ENCODE measurements at regions of chr19 and their contacts with region 1.

Region 1: GRCh38 chr19:43425567-43426392 is 11.1 kb downstream of the TEX101 start:
- DNase-seq: peak; percentile 40
- H3K4me3 ChIP-seq: no peak overlapping the region
- H3K27ac ChIP-seq: no peak overlapping the region
- H3K4me1 ChIP-seq: no peaks in the 10 kb centered on the region
- H3K27me3 ChIP-seq: no peaks in the 10 kb centered on the region
- CTCF ChIP-seq: peak; percentile 58 to 72

Region 2: DNA sequence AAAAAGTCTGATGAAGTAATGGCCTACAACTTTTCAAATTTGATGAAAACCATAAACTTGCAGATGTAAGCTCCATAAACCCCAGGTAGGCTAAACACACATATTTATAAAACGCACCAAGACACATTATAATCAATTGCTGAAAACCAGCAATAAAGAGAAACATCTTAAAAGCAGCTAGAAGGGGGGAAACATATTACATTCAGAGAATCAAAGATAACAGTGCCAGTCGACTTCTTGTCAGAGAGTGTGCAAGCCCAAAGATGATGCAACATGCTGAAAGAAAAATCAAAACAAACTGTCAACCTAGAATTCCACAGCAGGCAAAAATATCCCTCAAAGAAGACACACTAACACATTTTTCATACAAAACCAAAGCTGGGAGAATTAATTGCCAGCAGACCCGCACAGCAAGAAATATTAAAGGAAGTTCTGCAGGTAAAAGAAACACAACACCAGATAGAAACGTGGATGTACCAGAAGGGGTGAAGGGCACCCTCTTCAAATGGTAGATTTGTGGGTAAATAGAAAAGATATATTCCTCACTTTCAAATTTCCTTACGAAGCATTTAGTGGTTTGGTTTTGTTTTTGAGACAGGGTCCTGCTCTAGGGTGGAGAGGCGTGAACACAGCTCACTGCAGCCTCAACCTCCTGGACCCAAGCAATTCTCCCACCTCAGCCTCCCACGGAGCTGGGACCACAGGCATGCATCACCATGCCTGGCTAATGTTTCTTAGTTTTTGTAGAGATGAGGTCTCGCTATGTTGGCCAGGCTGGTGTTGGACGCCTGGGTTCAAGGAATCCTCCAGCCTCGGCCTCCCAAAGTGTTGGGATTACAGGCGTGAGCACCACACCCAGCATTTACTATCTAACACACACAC is 1415.3 kb before region 1 on chr19:
- CTCF ChIA-PET with region 1: no interaction called
- dilution Hi-C with region 1: no loop called
- in situ Hi-C with region 1: no loop called
- intact Hi-C with region 1: no loop called
- DNase-seq: no peak
- H3K4me3 ChIP-seq: no peak overlapping the region
- H3K27ac ChIP-seq: no peak overlapping the region
- H3K4me1 ChIP-seq: no peaks in the 10 kb centered on the region
- H3K27me3 ChIP-seq: no peaks in the 10 kb centered on the region
- CTCF ChIP-seq: no peak

Region 3: GRCh38 chr19:43101950-43102349 is 323.8 kb before region 1 on chr19:
- CTCF ChIA-PET with region 1: no interaction called
- dilution Hi-C with region 1: no loop called
- in situ Hi-C with region 1: no loop called
- intact Hi-C with region 1: loop called (anchors 5 kb)
- DNase-seq: no peak
- H3K4me3 ChIP-seq: no peak overlapping the region
- H3K27ac ChIP-seq: no peak overlapping the region
- H3K4me1 ChIP-seq: no peaks in the 10 kb centered on the region
- H3K27me3 ChIP-seq: no peaks in the 10 kb centered on the region
- CTCF ChIP-seq: peak; percentile 22 to 27

Region 4: GRCh38 chr19:43229315-43229714 is 196.5 kb before region 1 on chr19:
- CTCF ChIA-PET with region 1: no interaction called
- dilution Hi-C with region 1: no loop called
- in situ Hi-C with region 1: no loop called
- intact Hi-C with region 1: loop called (anchors 5 kb)
- DNase-seq: peak; percentile 46
- H3K4me3 ChIP-seq: no peak overlapping the region
- H3K27ac ChIP-seq: no peak overlapping the region
- H3K4me1 ChIP-seq: no peaks in the 10 kb centered on the region
- H3K27me3 ChIP-seq: no peaks in the 10 kb centered on the region
- CTCF ChIP-seq: peak; percentile 28 to 52

Region 5: DNA sequence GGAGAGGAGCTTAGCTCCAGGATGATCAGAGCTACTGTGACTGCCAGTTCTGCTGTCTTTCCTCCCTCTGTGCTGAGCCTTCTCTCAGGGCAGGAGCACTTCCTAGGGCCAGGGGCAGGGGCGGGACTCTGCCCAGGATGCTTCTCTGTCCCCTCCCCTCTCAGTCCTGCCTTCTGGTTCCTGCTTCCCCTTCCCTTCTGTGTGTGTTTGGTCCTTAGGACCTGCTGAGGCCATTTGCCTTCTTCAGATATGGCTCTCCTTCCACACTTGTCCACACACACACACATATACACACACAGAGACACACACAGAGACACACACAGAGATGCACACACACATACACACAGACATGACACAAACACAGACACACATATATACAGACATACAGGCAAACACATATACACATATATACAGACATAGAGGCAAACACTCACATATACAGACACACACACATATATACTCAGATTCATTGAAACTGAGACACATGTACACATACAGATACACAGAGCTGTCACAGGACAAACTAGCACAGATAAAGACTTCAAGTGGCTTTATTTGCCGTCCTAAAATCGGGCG is 94.3 kb before region 1 on chr19:
- CTCF ChIA-PET with region 1: no interaction called
- dilution Hi-C with region 1: no loop called
- in situ Hi-C with region 1: no loop called
- intact Hi-C with region 1: loop called (anchors 5 kb)
- DNase-seq: no peak
- H3K4me3 ChIP-seq: no peak overlapping the region
- H3K27ac ChIP-seq: no peak overlapping the region
- H3K4me1 ChIP-seq: no peaks in the 10 kb centered on the region
- H3K27me3 ChIP-seq: no peaks in the 10 kb centered on the region
- CTCF ChIP-seq: no peak

Region 6: DNA sequence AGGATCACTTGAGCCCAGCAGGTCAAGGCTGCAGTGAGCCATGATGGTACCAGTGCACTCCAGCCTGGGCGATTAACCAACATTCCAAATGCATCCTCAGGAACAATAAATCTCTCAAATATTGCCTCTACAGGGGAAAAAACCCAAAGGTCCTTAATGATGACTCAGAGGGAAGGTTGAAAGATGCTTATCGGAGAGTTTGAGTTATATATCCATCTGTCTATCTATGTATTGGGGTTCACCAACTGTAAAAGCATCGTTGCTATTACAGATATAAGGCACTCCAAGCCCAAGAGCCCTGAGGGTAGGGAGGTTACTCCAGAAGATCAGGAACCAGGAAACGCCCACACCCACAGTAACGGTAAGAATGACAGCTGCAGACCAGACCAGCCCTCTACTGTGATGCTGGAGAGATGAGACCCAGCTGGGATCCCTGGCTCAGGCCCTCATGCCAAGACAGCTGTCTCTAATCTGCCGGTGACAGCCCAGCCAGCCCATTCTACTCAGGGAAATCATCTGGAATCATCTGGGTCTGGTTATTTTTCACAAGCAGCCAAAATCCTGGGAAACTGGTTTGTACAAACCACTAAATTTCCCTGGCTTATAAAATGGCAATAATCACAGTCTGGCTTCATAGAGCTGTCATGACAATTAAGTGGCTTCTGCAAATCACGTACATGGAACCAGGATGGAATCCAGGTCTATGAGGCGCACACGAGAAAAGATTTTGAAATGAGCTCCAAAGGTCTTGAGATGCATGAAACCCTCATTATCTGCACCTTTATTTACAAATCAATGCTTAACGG is 12.7 kb after region 1 on chr19:
- CTCF ChIA-PET with region 1: no interaction called
- dilution Hi-C with region 1: no loop called
- in situ Hi-C with region 1: no loop called
- intact Hi-C with region 1: no loop called
- DNase-seq: peak; percentile 46
- H3K4me3 ChIP-seq: no peak overlapping the region
- H3K27ac ChIP-seq: no peak overlapping the region
- H3K4me1 ChIP-seq: peaks cover 8% of the 10 kb centered on the region
- H3K27me3 ChIP-seq: no peaks in the 10 kb centered on the region
- CTCF ChIP-seq: no peak

Region 7: DNA sequence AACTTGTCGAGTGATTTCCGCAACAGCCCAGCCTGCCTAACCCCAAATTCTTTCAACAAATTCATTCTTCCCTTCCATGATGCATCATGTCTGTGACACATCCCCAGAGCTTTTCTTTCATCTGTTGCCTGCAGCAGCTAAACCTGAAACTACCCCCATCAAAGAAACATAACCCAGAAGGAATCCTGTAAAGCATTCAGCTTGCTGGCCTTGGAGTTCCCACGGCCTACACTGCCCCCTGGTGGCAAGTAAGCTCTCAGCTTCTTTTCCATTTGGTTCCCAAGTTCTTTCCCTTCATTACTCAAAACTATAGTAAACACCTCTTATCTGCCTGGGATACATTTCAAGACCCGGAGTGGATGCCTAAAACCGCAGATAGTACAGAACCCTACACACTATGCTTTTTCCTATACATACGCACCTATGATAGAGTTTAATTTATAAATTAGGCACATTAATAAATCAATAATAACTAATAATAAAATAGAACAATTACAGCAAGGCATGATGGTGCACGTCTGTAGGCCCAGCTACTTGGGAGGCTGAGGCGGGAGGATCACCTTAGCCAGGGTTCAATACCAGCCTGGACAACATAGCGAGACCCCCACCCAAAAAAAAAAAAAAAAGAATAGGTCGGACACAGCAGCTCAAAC is 93.8 kb after region 1 on chr19:
- CTCF ChIA-PET with region 1: interaction called, 10 read pairs
- dilution Hi-C with region 1: no loop called
- in situ Hi-C with region 1: no loop called
- intact Hi-C with region 1: no loop called
- DNase-seq: peak; percentile 93
- H3K4me3 ChIP-seq: no peak overlapping the region
- H3K27ac ChIP-seq: peak overlapping the region; percentile 71
- H3K4me1 ChIP-seq: peaks cover 16% of the 10 kb centered on the region
- H3K27me3 ChIP-seq: no peaks in the 10 kb centered on the region
- CTCF ChIP-seq: peak; percentile 87 to 88

Region 8: DNA sequence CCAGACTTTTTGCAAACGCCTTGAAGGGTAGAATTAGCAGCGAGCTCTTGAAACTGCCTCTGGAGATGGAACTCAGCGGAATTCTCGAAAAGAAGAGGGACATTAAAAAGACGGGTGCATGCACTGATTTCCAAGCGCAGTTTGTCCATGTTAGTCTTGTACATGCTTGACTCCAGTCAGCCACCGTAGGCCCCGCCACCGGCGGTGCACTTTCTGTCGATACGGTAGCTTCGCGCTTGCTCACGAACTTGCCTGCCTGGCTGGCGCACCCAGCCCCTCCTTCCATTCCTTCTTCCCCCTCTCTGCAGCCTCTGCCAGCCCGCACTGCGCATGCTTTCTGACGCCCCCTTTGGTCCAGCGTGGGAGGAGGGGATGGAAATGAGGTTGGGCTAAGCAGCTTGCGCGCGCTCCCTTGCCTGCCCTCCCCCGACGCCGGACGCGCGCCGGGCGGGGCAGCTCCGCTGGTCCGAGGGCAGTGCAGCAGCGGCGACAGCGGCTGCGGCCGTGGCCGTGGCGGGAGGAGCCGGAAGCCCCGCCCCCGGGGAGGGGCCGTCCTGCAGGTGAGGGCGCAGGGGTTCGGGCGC is 107.3 kb after region 1 on chr19 and contains the start of gene ZNF575:
- CTCF ChIA-PET with region 1: interaction called, 17 read pairs
- dilution Hi-C with region 1: no loop called
- in situ Hi-C with region 1: no loop called
- intact Hi-C with region 1: no loop called
- DNase-seq: peak; percentile 92
- H3K4me3 ChIP-seq: peak within 1 kb of the TSS; percentile 47 to 74 (median 48)
- H3K27ac ChIP-seq: peak within 1 kb of the TSS; percentile 19
- H3K4me1 ChIP-seq: peaks cover 26% of the 10 kb centered on the region
- H3K27me3 ChIP-seq: no peaks in the 10 kb centered on the region
- CTCF ChIP-seq: no peak
- total RNA-seq, gene ZNF575: 0.17 to 2.1 TPM

Region 9: DNA sequence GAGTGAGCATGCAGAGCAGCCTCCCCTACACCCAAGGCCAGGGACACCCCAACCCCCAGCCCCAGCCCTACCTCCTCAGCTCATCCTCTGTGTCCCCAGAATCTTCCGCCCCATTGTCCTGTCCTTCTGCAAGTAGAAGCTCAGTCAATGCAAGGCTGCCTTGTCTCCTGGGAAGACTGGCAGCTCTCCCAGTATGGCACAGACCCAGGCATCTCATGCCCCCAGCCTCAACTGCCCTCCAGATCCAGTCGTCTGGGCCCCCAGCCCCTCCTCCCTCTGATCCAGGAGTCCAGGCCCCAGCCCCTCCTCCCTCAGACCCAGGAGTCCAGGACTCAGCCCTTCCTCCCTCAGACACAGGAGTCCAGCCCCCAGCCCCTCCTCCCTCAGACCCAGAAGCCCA is 120.2 kb after region 1 on chr19:
- CTCF ChIA-PET with region 1: no interaction called
- dilution Hi-C with region 1: no loop called
- in situ Hi-C with region 1: no loop called
- intact Hi-C with region 1: no loop called
- DNase-seq: no peak
- H3K4me3 ChIP-seq: no peak overlapping the region
- H3K27ac ChIP-seq: no peak overlapping the region
- H3K4me1 ChIP-seq: no peaks in the 10 kb centered on the region
- H3K27me3 ChIP-seq: no peaks in the 10 kb centered on the region
- CTCF ChIP-seq: no peak

Region 10: GRCh38 chr19:43651758-43652545 is 226.2 kb after region 1 on chr19:
- CTCF ChIA-PET with region 1: no interaction called
- dilution Hi-C with region 1: no loop called
- in situ Hi-C with region 1: no loop called
- intact Hi-C with region 1: loop called (anchors 5 kb)
- DNase-seq: no peak
- H3K4me3 ChIP-seq: no peak overlapping the region
- H3K27ac ChIP-seq: no peak overlapping the region
- H3K4me1 ChIP-seq: no peaks in the 10 kb centered on the region
- H3K27me3 ChIP-seq: no peaks in the 10 kb centered on the region
- CTCF ChIP-seq: peak; percentile 71 to 90